Prostate gland (tissue), 2 donors: ENCODE measurements at regions of chr6 and their contacts with region 1.

Region 1: DNA sequence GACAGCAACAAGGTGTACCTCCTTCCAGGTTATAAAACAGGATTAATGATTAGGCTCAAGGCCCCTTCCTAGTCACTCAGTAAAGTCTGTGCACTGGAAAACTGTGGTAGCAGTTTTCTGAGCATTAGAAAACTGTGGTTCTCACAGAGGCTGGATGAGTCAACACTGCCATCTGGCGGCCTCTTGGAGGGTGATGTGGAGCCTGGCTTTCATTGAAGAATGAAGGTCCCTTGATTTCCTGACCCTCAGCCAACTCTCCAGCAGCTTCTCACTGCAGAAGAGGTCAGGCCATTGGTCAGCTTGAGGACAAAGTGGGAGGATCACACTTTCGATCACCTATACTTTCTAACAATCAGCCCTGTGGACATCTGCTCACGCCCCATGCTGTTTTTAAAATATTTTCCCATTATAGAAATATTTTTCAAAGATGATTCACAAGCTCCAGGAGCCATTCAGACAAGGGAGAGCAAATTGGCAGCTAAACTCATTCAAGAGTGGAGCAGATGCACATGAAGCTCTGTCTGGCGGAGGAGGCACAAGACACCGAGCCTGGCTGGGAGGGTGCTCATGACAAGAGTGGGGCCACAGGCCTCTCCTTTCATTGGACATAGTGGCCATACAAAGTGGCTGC is 23.2 kb downstream of the PSMB1 start:
- DNase-seq: peak; percentile 70
- H3K4me3 ChIP-seq: no peak overlapping the region
- H3K27ac ChIP-seq: no peak overlapping the region
- H3K4me1 ChIP-seq: no peaks in the 10 kb centered on the region
- H3K27me3 ChIP-seq: no peaks in the 10 kb centered on the region
- CTCF ChIP-seq: peak; percentile 64 to 82 (median 78)
- POLR2A ChIP-seq: no peak

Region 2: GRCh38 chr6:169831450-169832246 is 698.3 kb before region 1 on chr6:
- intact Hi-C with region 1: loop called (anchors 2 kb)
- DNase-seq: peak; percentile 64
- H3K4me3 ChIP-seq: no peak overlapping the region
- H3K27ac ChIP-seq: no peak overlapping the region
- H3K4me1 ChIP-seq: no peaks in the 10 kb centered on the region
- H3K27me3 ChIP-seq: no peaks in the 10 kb centered on the region
- CTCF ChIP-seq: peak; percentile 93 to 95 (median 95)
- POLR2A ChIP-seq: no peak

Region 3: DNA sequence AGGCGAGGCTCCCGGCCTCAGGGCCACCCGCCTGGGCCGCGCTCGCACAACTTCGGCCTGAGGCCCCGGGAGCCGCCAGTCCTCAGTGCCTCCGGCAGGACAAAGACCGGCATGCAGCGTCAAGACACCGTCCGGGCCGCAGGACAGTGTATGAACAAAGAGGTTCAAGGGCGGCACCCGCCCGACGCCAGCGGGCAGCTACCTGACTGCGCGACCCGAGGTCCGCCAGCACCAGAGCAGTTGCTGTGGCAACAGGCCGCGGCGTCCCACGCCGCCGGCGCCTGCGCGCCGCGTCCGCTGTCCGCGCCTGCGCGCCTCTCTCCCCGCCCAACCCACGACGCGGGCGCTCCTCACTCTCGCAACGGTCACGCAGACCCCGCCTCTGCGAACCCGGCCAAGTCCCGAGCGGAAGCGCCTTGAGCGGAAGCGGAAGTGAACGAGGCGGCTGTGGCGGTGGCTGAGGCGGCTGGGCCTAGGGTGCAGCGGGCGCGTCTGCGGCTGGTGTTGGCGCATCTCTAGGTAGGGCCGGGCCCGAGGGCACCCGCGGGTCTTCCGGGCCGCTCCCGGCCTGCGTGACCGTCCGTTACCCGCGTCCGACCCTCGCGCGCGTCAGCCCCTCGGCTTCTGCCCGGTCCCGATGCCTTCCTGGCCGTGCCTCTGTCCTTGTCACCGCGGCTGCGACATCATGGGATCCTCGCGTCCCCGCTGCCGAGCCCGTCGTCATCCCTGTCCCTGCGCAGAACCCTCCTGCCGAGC is 223.5 kb before region 1 on chr6 and contains the start of gene FAM120B:
- intact Hi-C with region 1: loop called (anchors 10 kb)
- DNase-seq: peak; percentile 97
- H3K4me3 ChIP-seq: peak within 1 kb of the TSS; percentile 88 to 99
- H3K27ac ChIP-seq: peak within 1 kb of the TSS; percentile 77 to 83
- H3K4me1 ChIP-seq: peaks cover 11% of the 10 kb centered on the region
- H3K27me3 ChIP-seq: no peaks in the 10 kb centered on the region
- CTCF ChIP-seq: peak in 2 of 4 experiments; percentile 12 to 21
- POLR2A ChIP-seq: peak; percentile 87
- total RNA-seq, gene FAM120B: 28.8 to 45.0 TPM